ENCODE measurements at regions of chr2 and their contacts with region 1.

Region 1: GRCh38 chr2:134207564-134208209 is 46.2 kb upstream of the MGAT5 start:
- DNase-seq: no peak
- ATAC-seq: peak; percentile 99
- H3K4me3 ChIP-seq: no peak overlapping the region
- H3K27ac ChIP-seq: no peak overlapping the region
- H3K4me1 ChIP-seq: peaks cover 33% of the 10 kb centered on the region
- H3K27me3 ChIP-seq: no peaks in the 10 kb centered on the region
- CTCF ChIP-seq: peak; percentile 75 to 79 (median 78)
- EP300 ChIP-seq: no peak
- POLR2A ChIP-seq: no peak
- RAD21 ChIP-seq: peak; percentile 88

Region 2: GRCh38 chr2:133812826-133813617 is 394.7 kb before region 1 on chr2:
- CTCF ChIA-PET with region 1: no interaction called
- POLR2A ChIA-PET with region 1: no interaction called
- RAD21 ChIA-PET with region 1: no interaction called
- SMC1A ChIA-PET with region 1: no interaction called
- in situ Hi-C with region 1: no loop called
- intact Hi-C with region 1: no loop called
- DNase-seq: no peak
- ATAC-seq: no peak
- H3K4me3 ChIP-seq: no peak overlapping the region
- H3K27ac ChIP-seq: no peak overlapping the region
- H3K4me1 ChIP-seq: no peaks in the 10 kb centered on the region
- H3K27me3 ChIP-seq: no peaks in the 10 kb centered on the region
- CTCF ChIP-seq: no peak
- EP300 ChIP-seq: no peak
- POLR2A ChIP-seq: no peak
- RAD21 ChIP-seq: no peak

Region 3: DNA sequence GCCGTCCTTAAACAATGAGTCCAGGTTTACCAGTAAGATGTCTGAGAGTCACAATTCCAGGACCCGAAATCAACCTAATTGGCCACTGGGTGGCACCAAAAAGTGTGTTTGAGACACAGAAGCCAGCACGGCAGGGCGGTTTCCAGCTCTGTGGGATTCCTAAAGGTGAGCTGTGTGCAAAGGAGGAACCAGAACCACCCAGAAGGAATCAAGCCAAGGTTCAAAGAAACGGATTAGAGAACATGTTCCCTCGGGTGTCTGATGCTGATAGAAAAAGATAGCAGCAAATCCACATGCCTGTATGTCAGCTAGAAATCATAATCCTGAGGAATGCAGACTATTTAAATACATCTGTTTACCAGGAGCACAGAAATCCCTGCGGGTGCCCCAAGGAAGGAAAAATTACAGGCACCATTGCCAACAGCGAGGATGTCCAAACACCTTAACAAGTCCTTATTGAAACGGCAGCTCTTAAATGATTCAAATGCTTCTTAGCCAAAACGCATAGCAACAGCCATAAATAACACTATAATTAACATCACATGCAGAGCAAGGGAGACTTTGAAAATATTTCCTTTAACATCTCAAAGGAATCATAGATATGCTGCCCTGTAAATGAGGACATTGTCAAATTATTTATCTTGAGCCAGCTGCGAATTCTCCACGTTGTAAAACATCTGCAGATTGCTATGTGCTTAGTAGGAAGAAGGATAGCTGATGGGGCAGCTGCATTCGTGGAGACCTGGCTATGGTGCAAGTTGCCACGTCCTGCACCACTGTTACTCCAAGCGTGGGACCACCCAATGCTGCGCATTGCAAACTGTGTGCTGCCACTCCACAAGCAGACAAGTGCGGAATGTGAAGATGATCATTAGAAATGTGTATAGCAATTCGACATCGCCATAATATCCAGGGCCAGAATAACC is 320.7 kb before region 1 on chr2:
- CTCF ChIA-PET with region 1: interaction called, 43 read pairs
- POLR2A ChIA-PET with region 1: no interaction called
- RAD21 ChIA-PET with region 1: no interaction called
- SMC1A ChIA-PET with region 1: interaction called, 12 read pairs
- in situ Hi-C with region 1: loop called (anchors 10 kb)
- intact Hi-C with region 1: loop called (anchors 5 kb)
- DNase-seq: peak; percentile 21
- ATAC-seq: peak; percentile 94
- H3K4me3 ChIP-seq: no peak overlapping the region
- H3K27ac ChIP-seq: no peak overlapping the region
- H3K4me1 ChIP-seq: no peaks in the 10 kb centered on the region
- H3K27me3 ChIP-seq: no peaks in the 10 kb centered on the region; a peak in 2 of 4 replicates
- CTCF ChIP-seq: peak; percentile 57 to 76 (median 70); a peak in 5 of 6 replicates
- EP300 ChIP-seq: no peak
- POLR2A ChIP-seq: no peak
- RAD21 ChIP-seq: peak; percentile 84

Region 4: DNA sequence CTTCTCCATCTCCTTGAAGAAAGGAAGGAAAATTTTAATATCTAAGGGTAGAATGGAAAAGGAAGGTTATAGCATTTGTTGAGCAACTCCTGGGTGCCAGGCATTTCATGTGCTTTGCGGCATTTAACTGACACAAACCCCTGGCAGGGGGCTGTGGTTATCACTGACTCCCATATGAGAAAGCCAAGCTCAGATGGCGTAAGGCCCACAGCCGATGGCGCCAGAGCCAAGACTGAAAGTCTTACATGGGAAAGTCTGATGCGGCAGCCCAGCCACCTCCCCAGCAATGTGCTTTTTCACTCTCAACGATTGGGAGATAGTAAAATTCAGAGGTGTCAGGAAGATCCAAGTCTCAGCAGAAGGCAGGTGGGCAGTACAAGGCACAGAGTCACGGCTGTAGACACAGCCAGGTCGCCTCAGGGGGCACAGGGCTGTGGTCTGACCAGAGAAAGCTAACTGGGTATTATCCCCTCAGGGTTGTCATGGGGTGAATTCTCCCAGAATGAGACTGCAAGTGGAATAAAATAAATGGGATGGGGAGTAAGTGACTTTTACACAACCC is 315.3 kb before region 1 on chr2:
- CTCF ChIA-PET with region 1: interaction called, 43 read pairs
- POLR2A ChIA-PET with region 1: no interaction called
- RAD21 ChIA-PET with region 1: no interaction called
- SMC1A ChIA-PET with region 1: interaction called, 12 read pairs
- in situ Hi-C with region 1: loop called (anchors 10 kb)
- intact Hi-C with region 1: loop called (anchors 5 kb)
- DNase-seq: no peak
- ATAC-seq: no peak
- H3K4me3 ChIP-seq: no peak overlapping the region
- H3K27ac ChIP-seq: no peak overlapping the region
- H3K4me1 ChIP-seq: no peaks in the 10 kb centered on the region
- H3K27me3 ChIP-seq: no peaks in the 10 kb centered on the region; a peak in 1 of 4 replicates
- CTCF ChIP-seq: no peak
- EP300 ChIP-seq: no peak
- POLR2A ChIP-seq: no peak
- RAD21 ChIP-seq: no peak

Region 5: GRCh38 chr2:134127496-134127895 is 80.2 kb before region 1 on chr2:
- CTCF ChIA-PET with region 1: interaction called, 164 read pairs
- POLR2A ChIA-PET with region 1: interaction called, 4 read pairs
- RAD21 ChIA-PET with region 1: interaction called, 12 read pairs
- SMC1A ChIA-PET with region 1: interaction called, 19 read pairs
- in situ Hi-C with region 1: no loop called
- intact Hi-C with region 1: no loop called
- DNase-seq: no peak
- ATAC-seq: peak; percentile 65
- H3K4me3 ChIP-seq: peak overlapping the region; percentile 54
- H3K27ac ChIP-seq: 0 out of 2 replicates have a peak overlapping the region, but pooled peaks have one; percentile 17
- H3K4me1 ChIP-seq: peaks cover 32% of the 10 kb centered on the region
- H3K27me3 ChIP-seq: no peaks in the 10 kb centered on the region
- CTCF ChIP-seq: no peak
- EP300 ChIP-seq: no peak
- POLR2A ChIP-seq: peak; percentile 35; the same call in 1 of the 2 replicates
- RAD21 ChIP-seq: no peak

Region 6: GRCh38 chr2:134218930-134219658 is 11.4 kb after region 1 on chr2:
- CTCF ChIA-PET with region 1: interaction called, 62 read pairs
- POLR2A ChIA-PET with region 1: interaction called, 4 read pairs
- RAD21 ChIA-PET with region 1: interaction called, 23 read pairs
- SMC1A ChIA-PET with region 1: interaction called, 43 read pairs
- in situ Hi-C with region 1: no loop called
- intact Hi-C with region 1: no loop called
- DNase-seq: no peak
- ATAC-seq: peak; percentile 46
- H3K4me3 ChIP-seq: no peak overlapping the region
- H3K27ac ChIP-seq: peak overlapping the region; percentile 70
- H3K4me1 ChIP-seq: peaks cover 38% of the 10 kb centered on the region
- H3K27me3 ChIP-seq: no peaks in the 10 kb centered on the region
- CTCF ChIP-seq: 0 out of 6 replicates have a peak, but pooled peaks of 1 of the 3 experiments have one; percentile 3
- EP300 ChIP-seq: no peak
- POLR2A ChIP-seq: no peak
- RAD21 ChIP-seq: no peak

Region 7: GRCh38 chr2:134232868-134233727 is 25.4 kb after region 1 on chr2:
- CTCF ChIA-PET with region 1: interaction called, 8 read pairs
- POLR2A ChIA-PET with region 1: no interaction called
- RAD21 ChIA-PET with region 1: interaction called, 4 read pairs
- SMC1A ChIA-PET with region 1: interaction called, 14 read pairs
- in situ Hi-C with region 1: no loop called
- intact Hi-C with region 1: no loop called
- DNase-seq: no peak
- ATAC-seq: peak; percentile 59
- H3K4me3 ChIP-seq: peak overlapping the region; percentile 19
- H3K27ac ChIP-seq: peak overlapping the region; percentile 83
- H3K4me1 ChIP-seq: peaks cover 72% of the 10 kb centered on the region
- H3K27me3 ChIP-seq: no peaks in the 10 kb centered on the region
- CTCF ChIP-seq: 0 out of 6 replicates have a peak, but pooled peaks of 2 of the 3 experiments have one; percentile 6 to 17
- EP300 ChIP-seq: 0 out of 4 replicates have a peak, but pooled peaks have one; percentile 4 to 22
- POLR2A ChIP-seq: no peak
- RAD21 ChIP-seq: no peak

Measured in GM12878 (cell line).